ENCODE measurements at regions of chr11 and their contacts with region 1.

Region 1: GRCh38 chr11:62671575-62672389 is at the starts of genes LBHD1 and UQCC3:
- DNase-seq: peak; percentile 61
- ATAC-seq: peak; percentile 82
- H3K4me3 Mint-ChIP-seq: peak within 1 kb of the TSS; percentile 100
- H3K27ac Mint-ChIP-seq: peak within 1 kb of the TSS; percentile 98
- H3K4me1 Mint-ChIP-seq: peaks cover 62% of the 10 kb centered on the region
- H3K27me3 Mint-ChIP-seq: no peaks in the 10 kb centered on the region
- CTCF ChIP-seq: no peak
- total RNA-seq, gene LBHD1: 19.1 and 24.9 TPM in 2 replicates
- total RNA-seq, gene UQCC3: 8.3 and 9.4 TPM in 2 replicates

Region 2: GRCh38 chr11:62601394-62602140 is 70.2 kb before region 1 on chr11 and contains the start of gene MTA2:
- CTCF ChIA-PET with region 1: no interaction called
- POLR2A ChIA-PET with region 1: interaction called, 10 read pairs
- intact Hi-C with region 1: no loop called
- DNase-seq: peak; percentile 100
- ATAC-seq: peak; percentile 81
- H3K4me3 Mint-ChIP-seq: peak within 1 kb of the TSS; percentile 92
- H3K27ac Mint-ChIP-seq: peak within 1 kb of the TSS; percentile 97
- H3K4me1 Mint-ChIP-seq: peaks cover 45% of the 10 kb centered on the region
- H3K27me3 Mint-ChIP-seq: no peaks in the 10 kb centered on the region
- CTCF ChIP-seq: no peak
- total RNA-seq, gene MTA2: 170 and 175 TPM in 2 replicates

Region 3: DNA sequence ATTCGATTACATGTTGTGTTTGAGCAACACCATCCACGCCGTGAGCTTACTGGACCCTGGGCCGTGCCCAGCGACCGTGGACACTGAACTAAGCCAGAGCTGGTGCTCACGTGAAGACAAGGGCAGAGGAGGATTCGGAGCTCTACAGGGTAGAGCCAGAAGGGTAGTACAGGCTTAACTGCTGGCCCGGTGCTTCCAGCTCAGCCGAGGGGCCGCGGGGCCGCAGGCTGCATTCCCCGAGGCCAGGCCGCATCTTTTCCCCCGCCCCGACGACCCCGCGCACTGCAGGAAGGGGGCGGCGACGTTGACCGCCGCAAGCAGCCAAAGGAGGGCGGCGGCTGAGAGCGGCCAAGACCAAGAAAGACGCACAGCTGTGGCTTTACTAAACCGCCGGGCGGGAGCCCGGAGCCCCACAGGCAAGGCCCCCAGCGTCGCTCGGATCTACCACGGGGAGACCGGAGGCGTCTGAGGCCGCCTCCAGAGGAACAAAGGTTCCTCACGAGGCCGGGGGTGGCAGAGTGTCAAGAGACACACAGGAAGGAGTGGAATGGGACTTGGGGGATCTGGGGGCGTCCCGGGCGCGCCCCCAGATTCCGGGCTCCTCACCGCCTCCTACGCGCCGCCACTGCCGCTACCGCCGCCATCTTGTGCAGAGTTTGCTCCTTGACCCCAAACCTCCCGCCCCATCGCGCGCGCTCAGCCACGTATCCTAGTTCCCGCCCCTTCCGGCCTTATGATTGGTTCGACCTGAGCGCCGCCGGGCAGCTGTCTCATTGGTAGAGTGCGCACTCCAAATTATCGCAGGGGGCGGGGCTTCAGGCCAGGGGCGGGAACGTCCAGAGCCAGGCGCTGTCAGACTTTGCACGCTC is 25.6 kb before region 1 on chr11 and contains the start of gene GANAB:
- CTCF ChIA-PET with region 1: interaction called, 3 read pairs
- POLR2A ChIA-PET with region 1: interaction called, 400 read pairs
- intact Hi-C with region 1: no loop called
- DNase-seq: peak; percentile 89
- ATAC-seq: peak; percentile 99
- H3K4me3 Mint-ChIP-seq: peak within 1 kb of the TSS; percentile 93
- H3K27ac Mint-ChIP-seq: peak within 1 kb of the TSS; percentile 86
- H3K4me1 Mint-ChIP-seq: peaks cover 34% of the 10 kb centered on the region
- H3K27me3 Mint-ChIP-seq: no peaks in the 10 kb centered on the region
- CTCF ChIP-seq: no peak
- total RNA-seq, gene GANAB: 187 and 189 TPM in 2 replicates

Region 4: DNA sequence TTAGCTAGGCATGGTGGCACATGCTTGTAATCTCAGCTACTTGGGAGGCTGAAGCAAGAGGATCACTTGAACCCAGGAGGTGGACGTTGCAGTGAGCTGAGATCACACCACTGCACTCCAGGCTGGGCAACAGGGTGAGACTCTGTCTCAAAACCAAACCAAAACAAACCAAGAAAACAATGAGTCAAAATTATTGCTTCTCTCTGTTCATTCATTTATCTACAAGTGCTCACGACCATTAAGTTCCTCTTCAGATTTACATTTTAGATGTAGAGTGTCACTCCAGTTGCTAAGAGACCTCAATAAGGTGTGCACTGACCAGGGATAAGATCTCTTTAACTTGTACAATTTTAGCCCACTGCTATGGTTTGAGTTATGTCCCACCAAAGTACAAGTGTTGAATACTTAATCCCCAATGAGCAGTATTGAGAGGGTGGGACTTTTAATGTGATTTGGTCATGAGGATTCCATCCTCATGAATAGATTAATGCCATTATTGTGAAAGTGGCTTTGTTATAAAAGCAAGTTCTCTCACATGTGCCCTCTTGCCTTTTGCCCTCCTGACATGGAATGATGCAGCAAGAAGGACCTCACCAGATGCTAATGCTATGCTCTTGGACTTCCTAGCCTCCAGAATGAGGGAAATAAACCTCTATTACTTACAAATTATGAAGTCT is 47.7 kb after region 1 on chr11:
- CTCF ChIA-PET with region 1: no interaction called
- POLR2A ChIA-PET with region 1: no interaction called
- intact Hi-C with region 1: no loop called
- DNase-seq: no peak
- ATAC-seq: no peak
- H3K4me3 Mint-ChIP-seq: no peak overlapping the region
- H3K27ac Mint-ChIP-seq: no peak overlapping the region
- H3K4me1 Mint-ChIP-seq: peaks cover 17% of the 10 kb centered on the region
- H3K27me3 Mint-ChIP-seq: no peaks in the 10 kb centered on the region
- CTCF ChIP-seq: no peak

Region 5: GRCh38 chr11:62787005-62787759 is 115.4 kb after region 1 on chr11 and contains the start of gene TMEM179B:
- CTCF ChIA-PET with region 1: interaction called, 3 read pairs
- POLR2A ChIA-PET with region 1: interaction called, 10 read pairs
- intact Hi-C with region 1: no loop called
- DNase-seq: peak; percentile 87
- ATAC-seq: peak; percentile 71
- H3K4me3 Mint-ChIP-seq: peak within 1 kb of the TSS; percentile 92
- H3K27ac Mint-ChIP-seq: peak within 1 kb of the TSS; percentile 89
- H3K4me1 Mint-ChIP-seq: peaks cover 42% of the 10 kb centered on the region
- H3K27me3 Mint-ChIP-seq: no peaks in the 10 kb centered on the region
- CTCF ChIP-seq: peak; percentile 66
- total RNA-seq, gene TMEM179B: 34.9 and 47.7 TPM in 2 replicates

Region 6: GRCh38 chr11:64131683-64132190 is 1460.0 kb after region 1 on chr11:
- CTCF ChIA-PET with region 1: no interaction called
- POLR2A ChIA-PET with region 1: no interaction called
- intact Hi-C with region 1: no loop called
- DNase-seq: no peak
- ATAC-seq: no peak
- H3K4me3 Mint-ChIP-seq: no peak overlapping the region
- H3K27ac Mint-ChIP-seq: no peak overlapping the region
- H3K4me1 Mint-ChIP-seq: no peaks in the 10 kb centered on the region
- H3K27me3 Mint-ChIP-seq: peaks cover 6% of the 10 kb centered on the region
- CTCF ChIP-seq: no peak